Sciatic nerve (tissue), 2 donors: ENCODE measurements at regions of chr10 and their contacts with region 1.

Region 1: DNA sequence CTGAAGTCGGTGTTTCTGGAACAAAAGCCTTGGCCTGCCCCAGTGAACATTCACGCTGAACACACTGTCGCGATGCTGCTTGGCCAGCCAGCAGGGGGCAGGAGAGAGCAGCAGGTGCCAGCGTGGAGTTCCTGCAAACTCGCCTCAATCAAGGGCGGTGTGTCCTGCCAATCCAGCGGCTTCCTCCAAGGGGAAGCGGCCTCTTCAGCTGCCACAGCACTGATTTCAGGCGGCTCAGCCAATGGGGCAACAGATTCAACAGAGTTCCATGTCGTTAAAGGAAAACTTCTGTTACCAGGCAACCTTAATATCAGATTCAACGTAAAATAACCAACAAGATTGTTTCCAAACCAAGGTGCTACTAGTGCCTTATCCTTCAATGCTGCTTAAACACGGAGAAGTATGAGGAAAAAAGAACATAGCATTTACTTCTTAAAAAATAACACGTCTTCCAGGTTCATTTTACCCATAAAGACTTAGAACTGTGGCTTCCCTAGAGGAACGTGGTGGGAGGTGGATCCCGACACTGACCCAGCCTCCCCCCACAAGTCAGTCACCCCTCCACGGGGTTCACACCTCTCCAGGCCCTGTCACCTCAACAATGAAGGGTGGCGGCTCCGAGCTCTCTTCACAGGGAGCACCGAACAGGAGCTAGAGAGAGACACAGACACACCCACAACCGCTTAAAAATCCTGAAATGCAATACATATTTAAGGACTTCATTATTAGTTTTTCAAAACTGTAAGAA is 178.2 kb downstream of the DIP2C start:
- DNase-seq: peak; percentile 97
- ATAC-seq: peak; percentile 94

Region 2: DNA sequence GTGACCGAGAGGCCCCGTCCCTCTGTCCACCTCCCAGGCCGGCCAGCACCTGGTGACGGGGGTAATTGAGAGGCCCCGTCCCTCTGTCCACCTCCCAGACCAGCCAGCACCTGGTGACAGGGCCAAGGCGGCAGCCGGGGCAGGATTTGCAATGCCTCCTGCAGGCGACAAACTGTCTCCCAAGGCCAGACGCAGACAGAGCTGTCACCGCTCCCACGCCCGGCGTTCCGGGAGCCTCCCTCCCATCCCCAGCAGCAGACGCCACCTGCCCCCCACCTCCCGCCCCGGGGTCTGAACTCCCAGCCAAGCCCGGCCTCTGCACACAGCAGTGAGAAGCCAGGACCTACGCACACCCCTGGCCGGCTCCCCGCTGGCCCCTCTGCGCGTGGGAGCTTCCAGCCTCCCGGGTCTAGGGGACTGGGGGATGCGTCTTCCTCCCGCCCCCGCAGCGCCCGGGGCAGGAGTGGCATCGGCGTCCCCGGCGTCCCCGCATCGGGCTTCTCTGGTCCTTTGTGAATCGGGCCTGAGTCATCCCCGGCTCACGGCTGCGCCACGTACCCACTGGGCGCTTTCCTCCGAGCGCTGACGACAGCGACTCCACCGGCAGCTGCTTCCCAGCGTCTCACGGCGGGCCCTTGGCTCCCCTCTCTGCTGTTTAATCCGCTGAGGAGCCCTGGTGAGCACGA is 273.3 kb after region 1 on chr10:
- intact Hi-C with region 1: loop called (anchors 10 kb)
- DNase-seq: no peak
- ATAC-seq: peak; percentile 52

Region 3: DNA sequence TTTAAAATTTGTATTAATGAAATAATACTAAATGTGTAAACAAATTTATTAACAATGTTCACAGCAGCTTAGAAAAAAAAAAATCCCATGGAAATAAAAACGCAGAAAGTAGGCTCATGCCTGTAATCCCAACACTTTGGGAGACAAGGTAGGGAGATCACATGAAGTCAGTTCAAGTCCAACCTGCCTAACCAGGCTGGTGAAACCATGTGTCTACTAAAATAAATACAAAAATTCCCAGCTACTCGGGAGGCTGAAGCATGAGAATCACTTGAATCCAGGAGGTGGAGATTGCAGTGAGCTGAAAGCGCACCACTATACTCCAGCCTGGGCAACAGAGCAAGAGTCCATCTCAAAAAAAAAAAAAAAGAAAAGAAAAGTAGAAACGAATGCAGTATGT is 384.0 kb after region 1 on chr10:
- intact Hi-C with region 1: no loop called
- DNase-seq: no peak
- ATAC-seq: no peak

Region 4: DNA sequence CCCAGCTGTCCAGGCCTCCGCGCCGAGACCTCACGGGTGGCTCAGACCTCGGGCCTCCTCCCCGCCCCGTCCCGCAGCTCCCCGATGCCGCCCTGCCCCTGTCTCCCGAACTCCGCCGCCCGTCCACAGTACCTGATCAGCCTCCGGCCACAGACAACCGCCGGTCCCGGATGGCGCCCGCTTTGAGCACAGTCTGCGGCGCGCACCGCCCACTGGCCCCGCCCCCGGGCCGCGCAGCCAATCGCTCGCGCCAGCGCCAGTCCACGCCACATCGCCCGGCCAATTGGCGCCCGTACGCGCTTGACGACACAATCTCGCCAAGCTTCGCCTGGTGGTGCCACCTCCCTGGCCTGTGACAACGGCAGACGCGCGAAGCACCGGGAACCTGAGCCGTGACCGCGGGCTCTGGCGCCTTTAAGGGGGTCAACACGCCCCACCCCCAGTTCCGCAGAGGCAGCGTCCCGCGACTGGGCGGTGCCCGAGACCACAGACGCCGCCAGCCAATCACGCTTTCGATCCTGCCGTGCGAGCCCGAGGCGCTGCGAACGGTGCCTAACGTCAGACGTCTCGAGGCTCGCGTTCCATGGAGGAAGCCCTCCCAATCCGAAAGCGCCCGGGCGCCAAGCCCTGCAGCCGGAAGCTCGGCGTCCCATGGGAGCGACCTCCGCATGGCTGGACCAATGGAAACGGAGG is 537.6 kb after region 1 on chr10 and contains the start of gene IDI1:
- intact Hi-C with region 1: loop called (anchors 10 kb)
- DNase-seq: peak; percentile 98
- ATAC-seq: peak; percentile 97
- total RNA-seq, gene IDI1: 60.9 TPM